Left colon (tissue), 2 donors: ENCODE measurements at regions of chr13 and their contacts with region 1.

Region 1: DNA sequence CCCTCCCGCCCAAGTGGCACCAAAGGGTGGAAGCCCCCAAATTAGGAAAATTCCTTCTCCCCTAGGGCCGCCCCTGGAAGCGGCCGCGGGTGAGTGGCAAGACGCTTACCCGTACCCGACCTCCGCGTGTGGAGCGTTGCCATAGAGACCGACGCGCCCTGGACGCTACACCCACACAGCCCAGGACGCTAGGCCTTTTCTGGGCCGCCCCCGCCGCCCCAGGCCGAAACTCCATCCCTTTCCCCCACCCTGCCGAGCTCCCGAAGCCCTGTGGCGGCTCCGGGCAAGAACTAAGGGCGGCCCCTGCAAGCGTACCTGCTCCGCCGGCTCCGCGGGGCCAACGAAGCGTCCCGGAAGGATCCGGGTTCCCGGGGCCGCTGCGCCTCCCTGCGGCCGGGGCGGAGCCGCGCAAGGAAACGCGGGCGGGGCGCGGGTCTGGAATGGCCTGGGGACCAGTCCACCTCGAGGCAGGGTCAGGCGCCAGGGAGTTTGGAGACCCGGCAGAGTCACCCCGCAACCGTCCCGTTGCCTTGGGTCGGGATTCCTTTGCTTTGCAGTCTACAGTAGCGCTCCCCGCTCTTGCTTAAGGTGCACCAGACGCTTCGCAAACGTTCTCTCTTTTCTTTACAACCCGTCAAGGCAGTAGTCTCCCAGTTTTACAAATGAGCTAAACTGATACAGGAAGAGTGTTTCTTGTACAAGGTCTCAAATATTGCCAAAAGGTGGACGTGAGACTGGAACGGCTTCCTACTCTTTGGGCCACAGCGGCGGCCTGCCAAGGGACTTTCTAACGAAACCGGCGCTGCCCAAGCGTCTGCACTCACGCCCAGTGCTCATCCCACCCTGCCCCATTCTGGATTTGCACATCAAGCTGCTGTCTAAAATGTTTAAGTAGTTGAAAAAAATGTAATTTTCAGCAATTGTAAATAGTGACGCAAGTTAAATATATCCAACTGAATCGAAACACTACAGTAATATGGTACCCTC is at the start of gene NEK5:
- DNase-seq: peak; percentile 50 to 78
- ATAC-seq: peak; percentile 90
- total RNA-seq, gene NEK5: 0.20 TPM in 1 of 2 donors, not detected in the other

Region 2: GRCh38 chr13:51895906-51896888 is 232.8 kb before region 1 on chr13:
- intact Hi-C with region 1: no loop called
- DNase-seq: peak; percentile 50 to 66
- ATAC-seq: peak; percentile 86

Region 3: DNA sequence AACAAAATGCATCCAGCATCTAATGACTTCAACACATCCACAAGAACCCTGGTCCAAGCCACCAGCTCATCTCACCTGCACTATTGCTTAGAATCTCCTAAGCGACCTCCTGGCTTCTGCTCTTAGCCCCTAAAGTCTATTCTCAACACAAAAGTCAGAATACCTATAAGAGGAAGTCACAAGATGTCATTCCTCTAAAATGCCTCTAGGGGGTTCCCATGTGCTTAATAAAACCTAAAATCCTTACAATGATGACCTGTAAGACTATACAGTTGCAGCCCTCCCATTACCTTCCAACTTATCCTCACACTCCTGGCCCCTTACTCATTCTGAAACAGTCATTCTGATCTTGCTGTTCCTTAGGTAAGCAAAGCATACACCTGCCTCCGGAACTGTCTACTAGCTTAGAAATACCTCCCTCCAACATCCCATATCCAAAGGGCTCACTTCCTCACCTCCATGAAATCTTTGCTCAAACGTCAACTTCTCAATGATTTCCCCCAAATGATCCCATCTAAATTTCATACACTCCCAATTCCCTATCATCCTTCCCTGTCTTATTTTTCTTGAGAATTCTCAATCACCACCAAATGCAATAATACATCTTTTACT is 127.8 kb before region 1 on chr13:
- intact Hi-C with region 1: loop called in 1 of 2 experiments (anchors 10 kb)
- DNase-seq: no peak
- ATAC-seq: peak; percentile 35